Activated CD4-positive, alpha-beta T cell treated with anti-CD3 and anti-CD28 coated beads for 36 hours (primary cell): ENCODE measurements at regions of chr3 and their contacts with region 1.

Region 1: DNA sequence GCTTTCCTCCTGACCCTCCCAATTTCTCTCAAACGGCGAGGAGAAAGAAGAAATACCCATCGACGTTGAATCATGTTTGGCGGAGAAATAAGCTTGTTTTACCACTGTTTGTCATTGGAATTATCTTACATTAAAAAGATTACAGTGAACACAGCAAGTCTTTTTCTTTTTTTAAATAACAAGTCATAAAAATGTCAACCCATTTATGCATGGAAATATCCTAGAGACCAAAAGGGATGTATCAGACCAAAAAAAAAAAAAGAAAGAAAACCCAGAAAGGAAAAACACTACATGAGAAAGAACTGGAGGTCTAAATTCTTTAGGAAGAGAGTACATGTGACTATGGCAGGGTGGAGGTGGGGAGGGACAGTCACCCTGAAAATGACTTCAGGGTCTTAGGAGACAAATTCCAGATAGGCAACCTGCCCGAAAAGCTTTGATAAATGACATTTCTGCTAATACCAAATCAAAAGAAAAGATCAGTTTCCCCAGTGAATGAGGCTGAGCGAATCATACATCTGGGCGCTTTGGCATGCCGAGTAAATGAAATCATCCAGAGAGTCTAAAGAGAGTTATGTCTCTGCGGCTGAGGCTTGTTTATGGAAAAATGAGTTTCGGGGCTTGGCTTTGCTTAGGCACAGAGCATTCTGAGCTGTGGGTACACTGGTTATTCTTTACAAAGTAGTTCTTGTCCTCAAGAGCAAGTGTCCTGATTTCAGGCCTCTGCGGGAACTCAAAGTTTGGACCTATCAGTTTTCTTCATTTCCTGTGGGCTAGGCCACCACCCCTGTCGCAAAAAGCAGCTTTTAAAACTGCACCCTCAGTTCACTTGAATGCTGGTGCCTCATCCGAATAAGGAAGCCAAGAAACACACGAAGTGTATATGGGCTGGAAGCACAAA is 110.1 kb upstream of the TGFBR2 start:
- DNase-seq: no peak
- ATAC-seq: no peak
- H3K4me3 Mint-ChIP-seq: no peak overlapping the region
- H3K27ac Mint-ChIP-seq: no peak overlapping the region
- H3K4me1 Mint-ChIP-seq: peaks cover 37% of the 10 kb centered on the region
- H3K27me3 Mint-ChIP-seq: no peaks in the 10 kb centered on the region

Region 2: DNA sequence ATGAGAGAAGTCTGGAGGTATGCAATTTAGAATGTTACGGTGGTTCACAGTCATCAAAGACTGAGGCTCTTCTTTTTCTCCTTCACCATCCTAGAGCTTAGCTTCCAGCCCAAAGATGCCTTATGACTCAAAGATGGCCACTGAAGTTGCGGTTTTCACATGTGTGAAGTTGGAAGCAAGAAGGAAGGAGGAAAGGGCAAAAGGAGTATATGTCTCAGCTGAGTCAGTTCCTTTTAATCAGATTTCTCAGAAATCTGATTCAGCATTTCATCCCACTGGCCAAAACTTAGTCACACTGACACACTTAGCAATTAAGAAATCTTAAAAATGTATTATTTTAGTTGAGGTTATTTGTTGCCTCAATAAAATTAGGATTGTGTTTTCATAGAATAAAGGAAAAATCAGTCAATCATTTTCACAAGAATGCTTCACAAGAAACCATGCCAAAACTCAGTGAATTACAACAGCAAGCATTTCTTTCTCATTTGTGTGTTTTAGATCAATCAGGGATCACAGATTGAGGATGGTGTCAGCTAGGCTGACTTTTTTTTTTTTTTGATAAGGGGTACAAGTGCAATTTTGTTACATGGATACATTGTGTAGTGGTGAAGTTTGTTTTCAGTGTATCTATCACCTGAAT is 609.2 kb after region 1 on chr3:
- CTCF ChIA-PET with region 1: no interaction called
- POLR2A ChIA-PET with region 1: no interaction called
- intact Hi-C with region 1: loop called in 1 of 2 experiments (anchors 10 kb)
- DNase-seq: peak; percentile 38
- ATAC-seq: peak; percentile 47
- H3K4me3 Mint-ChIP-seq: no peak overlapping the region
- H3K27ac Mint-ChIP-seq: no peak overlapping the region
- H3K4me1 Mint-ChIP-seq: peaks cover 40% of the 10 kb centered on the region
- H3K27me3 Mint-ChIP-seq: no peaks in the 10 kb centered on the region